ENCODE measurements at regions of chr2 and their contacts with region 1.

Region 1: DNA sequence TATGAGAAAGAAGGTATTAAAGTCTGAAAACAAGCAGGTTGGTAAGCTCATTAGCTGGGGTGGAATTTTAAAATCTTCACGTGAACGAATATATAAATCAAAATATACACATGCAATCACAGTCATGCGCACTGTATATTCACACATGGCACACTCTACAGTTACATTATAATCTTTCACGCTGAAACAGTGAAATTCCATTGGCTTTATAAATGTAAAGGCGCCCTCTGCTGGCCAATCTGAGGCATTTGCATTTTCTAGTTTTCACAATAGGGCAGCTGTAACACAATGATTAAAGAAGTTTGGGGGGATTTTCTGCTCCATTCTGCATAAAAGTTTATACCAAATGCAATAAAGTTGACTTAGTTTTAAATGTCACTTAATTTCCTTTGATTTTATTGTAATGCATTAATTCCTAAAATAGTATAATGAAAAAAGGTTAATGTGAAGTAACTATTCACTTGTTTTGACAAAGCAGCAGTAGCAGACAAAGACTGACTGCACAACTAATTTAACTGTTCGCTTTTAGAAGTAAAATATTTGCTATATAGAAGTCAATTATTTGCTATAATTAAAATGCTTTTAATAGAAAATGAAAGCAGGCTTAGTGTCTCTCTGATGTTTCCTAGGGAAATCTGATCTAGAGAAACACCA is 17.2 kb downstream of the IFIH1 start:
- DNase-seq: peak; percentile 55
- H3K4me3 ChIP-seq: no peak overlapping the region
- H3K27ac ChIP-seq: no peak overlapping the region
- H3K27me3 ChIP-seq: no peaks in the 10 kb centered on the region
- CTCF ChIP-seq: peak; percentile 83

Region 2: GRCh38 chr2:161586517-161587167 is 714.6 kb before region 1 on chr2:
- CTCF ChIA-PET with region 1: interaction called, 64 read pairs
- POLR2A ChIA-PET with region 1: no interaction called
- DNase-seq: no peak
- H3K4me3 ChIP-seq: no peak overlapping the region
- H3K27ac ChIP-seq: no peak overlapping the region
- H3K27me3 ChIP-seq: no peaks in the 10 kb centered on the region
- CTCF ChIP-seq: peak; percentile 69

Region 3: GRCh38 chr2:162166174-162166573 is 135.1 kb before region 1 on chr2:
- CTCF ChIA-PET with region 1: interaction called, 15 read pairs
- POLR2A ChIA-PET with region 1: no interaction called
- DNase-seq: no peak
- H3K4me3 ChIP-seq: no peak overlapping the region
- H3K27ac ChIP-seq: no peak overlapping the region
- H3K27me3 ChIP-seq: no peaks in the 10 kb centered on the region
- CTCF ChIP-seq: no peak

Region 4: GRCh38 chr2:162196638-162197037 is 104.6 kb before region 1 on chr2:
- CTCF ChIA-PET with region 1: interaction called, 25 read pairs
- POLR2A ChIA-PET with region 1: interaction called, 4 read pairs
- DNase-seq: no peak
- H3K4me3 ChIP-seq: no peak overlapping the region
- H3K27ac ChIP-seq: peak overlapping the region; percentile 87
- H3K27me3 ChIP-seq: no peaks in the 10 kb centered on the region
- CTCF ChIP-seq: no peak

Region 5: GRCh38 chr2:162243294-162243693 is 58.0 kb before region 1 on chr2 and contains the start of gene FAP:
- CTCF ChIA-PET with region 1: interaction called, 46 read pairs
- POLR2A ChIA-PET with region 1: interaction called, 13 read pairs
- DNase-seq: peak; percentile 83
- H3K4me3 ChIP-seq: peak within 1 kb of the TSS; percentile 75
- H3K27ac ChIP-seq: peak within 1 kb of the TSS; percentile 90
- H3K27me3 ChIP-seq: no peaks in the 10 kb centered on the region
- CTCF ChIP-seq: no peak
- polyA plus RNA-seq, gene FAP: 300 and 374 TPM in 2 replicates

Region 6: GRCh38 chr2:162318328-162319180 is 17.3 kb after region 1 on chr2 and contains the start of gene IFIH1:
- CTCF ChIA-PET with region 1: interaction called, 22 read pairs
- POLR2A ChIA-PET with region 1: no interaction called
- DNase-seq: peak; percentile 68
- H3K4me3 ChIP-seq: peak within 1 kb of the TSS; percentile 74
- H3K27ac ChIP-seq: no peak within 1 kb of the TSS
- H3K27me3 ChIP-seq: no peaks in the 10 kb centered on the region
- CTCF ChIP-seq: peak; percentile 57
- polyA plus RNA-seq, gene IFIH1: 2.0 and 2.2 TPM in 2 replicates

Measured in AG04450 (cell line).